ENCODE measurements at regions of chr13 and their contacts with region 1.

Region 1: GRCh38 chr13:106507560-106508274 is 27.7 kb downstream of the EFNB2 start:
- DNase-seq: peak; percentile 59 to 89
- H3K4me3 ChIP-seq: peak overlapping the region; percentile 41; the same call in 1 of the 2 replicates
- H3K27ac ChIP-seq: peak overlapping the region; percentile 84
- H3K4me1 ChIP-seq: peaks cover 28% of the 10 kb centered on the region
- H3K27me3 ChIP-seq: no peaks in the 10 kb centered on the region
- CTCF ChIP-seq: no peak

Region 2: DNA sequence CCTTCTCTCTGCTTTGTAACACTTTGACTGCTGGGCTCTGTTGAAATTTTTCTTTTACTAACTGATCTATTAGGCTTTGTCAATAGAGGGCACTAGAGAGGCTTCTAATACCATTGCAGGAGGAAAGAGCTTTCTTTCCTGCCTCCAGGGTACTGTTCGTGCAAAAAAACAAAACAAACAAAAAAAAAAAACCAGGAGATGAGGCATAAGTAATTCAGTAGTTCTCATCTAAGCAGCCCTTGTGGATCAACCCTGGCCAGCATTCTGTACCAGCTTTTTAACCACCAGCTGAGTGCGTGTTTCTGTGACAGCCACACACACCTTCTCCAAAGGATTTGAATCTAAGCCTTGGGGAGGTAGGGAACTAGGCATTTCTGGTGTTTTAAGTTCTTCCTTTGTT is 1733.9 kb before region 1 on chr13:
- CTCF ChIA-PET with region 1: no interaction called
- POLR2A ChIA-PET with region 1: interaction called, 11 read pairs
- intact Hi-C with region 1: no loop called
- DNase-seq: peak in 1 of 2 experiments; percentile 45
- H3K4me3 ChIP-seq: no peak overlapping the region
- H3K27ac ChIP-seq: no peak overlapping the region
- H3K4me1 ChIP-seq: no peaks in the 10 kb centered on the region
- H3K27me3 ChIP-seq: no peaks in the 10 kb centered on the region
- CTCF ChIP-seq: peak; percentile 76

Region 3: GRCh38 chr13:106028911-106029310 is 478.8 kb before region 1 on chr13:
- CTCF ChIA-PET with region 1: no interaction called
- POLR2A ChIA-PET with region 1: interaction called, 11 read pairs
- intact Hi-C with region 1: no loop called
- DNase-seq: no peak
- H3K4me3 ChIP-seq: no peak overlapping the region
- H3K27ac ChIP-seq: no peak overlapping the region
- H3K4me1 ChIP-seq: peaks cover 8% of the 10 kb centered on the region; the same call in 1 of the 2 replicates
- H3K27me3 ChIP-seq: no peaks in the 10 kb centered on the region
- CTCF ChIP-seq: no peak

Measured in PC-9 (cell line).